Tibial artery (tissue), 4 donors: ENCODE measurements at regions of chr5 and their contacts with region 1.

Region 1: GRCh38 chr5:14685757-14686156 is 21.2 kb downstream of the OTULIN start:
- DNase-seq: no peak
- H3K4me3 ChIP-seq: no peak overlapping the region
- H3K27ac ChIP-seq: peak overlapping the region in 1 of 2 donors; percentile 40
- H3K4me1 ChIP-seq: peaks cover 0 to 24% (median 10%) of the 10 kb centered on the region in 4 donors
- H3K27me3 ChIP-seq: no peaks in the 10 kb centered on the region
- CTCF ChIP-seq: peak; percentile 67 to 75

Region 2: GRCh38 chr5:14714706-14715105 is 28.9 kb after region 1 on chr5:
- intact Hi-C with region 1: no loop called
- DNase-seq: no peak
- H3K4me3 ChIP-seq: no peak overlapping the region
- H3K27ac ChIP-seq: no peak overlapping the region
- H3K4me1 ChIP-seq: no peaks in the 10 kb centered on the region
- H3K27me3 ChIP-seq: no peaks in the 10 kb centered on the region
- CTCF ChIP-seq: no peak

Region 3: GRCh38 chr5:15003511-15003920 is 317.8 kb after region 1 on chr5:
- intact Hi-C with region 1: loop called (anchors 5 kb)
- DNase-seq: peak; percentile 38 to 71
- H3K4me3 ChIP-seq: no peak overlapping the region
- H3K27ac ChIP-seq: no peak overlapping the region
- H3K4me1 ChIP-seq: peaks cover 0 to 20% (median 11%) of the 10 kb centered on the region in 4 donors
- H3K27me3 ChIP-seq: no peaks in the 10 kb centered on the region
- CTCF ChIP-seq: peak; percentile 78 to 83